ENCODE measurements at regions of chr13 and their contacts with region 1.

Region 1: GRCh38 chr13:28337166-28338005 is 157.5 kb downstream of the FLT1 start:
- DNase-seq: no peak

Region 2: DNA sequence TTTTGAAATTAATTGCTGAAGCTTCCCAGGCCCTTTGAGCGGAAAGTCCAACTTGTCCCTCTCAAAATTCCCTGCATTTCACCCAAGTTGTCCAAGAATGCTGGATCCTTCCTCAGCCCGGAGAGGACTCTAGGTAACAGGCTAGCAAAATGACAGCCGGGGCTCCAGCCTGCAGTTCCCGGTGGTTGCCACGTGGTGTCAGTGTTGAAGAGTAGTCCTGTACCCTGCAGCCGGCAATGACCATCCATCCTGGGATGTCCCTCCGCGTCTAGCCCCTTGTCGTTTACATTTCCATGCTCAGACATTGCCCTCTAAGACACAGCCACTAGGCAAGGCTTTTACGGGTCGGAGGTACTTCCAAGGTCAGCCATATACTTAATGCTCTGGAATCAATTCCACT is 855.6 kb before region 1 on chr13:
- intact Hi-C with region 1: no loop called
- DNase-seq: no peak

Region 3: DNA sequence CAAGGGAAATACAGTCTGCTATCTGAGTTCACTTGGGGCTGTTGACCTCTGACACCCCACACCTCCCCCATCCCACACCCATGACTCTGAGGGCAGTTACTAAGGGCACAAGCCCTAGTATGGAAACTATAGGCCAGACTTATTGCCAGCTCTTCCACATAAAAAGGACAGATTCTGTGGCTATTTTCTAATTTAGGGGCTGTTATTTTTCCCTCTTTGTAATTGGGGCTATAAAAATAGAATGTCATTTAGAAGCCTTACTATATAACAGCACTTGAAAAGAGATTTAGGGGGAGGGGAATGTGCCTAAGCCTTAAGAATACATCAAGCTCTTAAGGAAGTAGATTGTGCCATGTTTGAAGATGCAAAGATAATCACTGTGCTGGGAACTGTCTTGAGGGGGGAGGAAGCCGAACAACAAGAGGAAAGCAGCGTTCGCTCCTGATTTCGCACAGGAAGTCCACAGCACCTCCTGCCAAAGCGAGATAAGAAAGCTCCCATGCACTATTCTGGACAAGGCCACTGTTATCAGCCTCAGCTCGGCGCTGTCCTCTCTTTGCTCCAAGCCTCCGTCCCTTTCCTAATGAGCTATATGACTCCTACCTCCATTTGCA is 71.0 kb after region 1 on chr13:
- intact Hi-C with region 1: loop called (anchors 5 kb)
- DNase-seq: peak; percentile 78